Activated T-helper 2 cell treated with anti-CD3 and anti-CD28 coated beads, Interferon-gamma antibody, Interleukin-2, Interleukin-4, amounts not matched to agents 10 μg/mL and 5 μg/mL and 100 μg/mL, durations not matched to agents 14 hours and 24 hours and 36 hours (primary cell): ENCODE measurements at regions of chr3 and their contacts with region 1.

Region 1: DNA sequence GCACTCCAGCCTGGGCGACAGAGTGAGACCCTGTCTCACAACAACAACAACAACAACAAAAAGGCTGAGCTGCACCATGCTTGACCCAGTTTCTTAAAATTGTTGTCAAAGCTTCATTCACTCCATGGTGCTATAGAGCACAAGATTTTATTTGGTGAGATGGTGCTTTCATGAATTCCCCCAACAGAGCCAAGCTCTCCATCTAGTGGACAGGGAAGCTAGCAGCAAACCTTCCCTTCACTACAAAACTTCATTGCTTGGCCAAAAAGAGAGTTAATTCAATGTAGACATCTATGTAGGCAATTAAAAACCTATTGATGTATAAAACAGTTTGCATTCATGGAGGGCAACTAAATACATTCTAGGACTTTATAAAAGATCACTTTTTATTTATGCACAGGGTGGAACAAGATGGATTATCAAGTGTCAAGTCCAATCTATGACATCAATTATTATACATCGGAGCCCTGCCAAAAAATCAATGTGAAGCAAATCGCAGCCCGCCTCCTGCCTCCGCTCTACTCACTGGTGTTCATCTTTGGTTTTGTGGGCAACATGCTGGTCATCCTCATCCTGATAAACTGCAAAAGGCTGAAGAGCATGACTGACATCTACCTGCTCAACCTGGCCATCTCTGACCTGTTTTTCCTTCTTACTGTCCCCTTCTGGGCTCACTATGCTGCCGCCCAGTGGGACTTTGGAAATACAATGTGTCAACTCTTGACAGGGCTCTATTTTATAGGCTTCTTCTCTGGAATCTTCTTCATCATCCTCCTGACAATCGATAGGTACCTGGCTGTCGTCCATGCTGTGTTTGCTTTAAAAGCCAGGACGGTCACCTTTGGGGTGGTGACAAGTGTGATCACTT is 2.0 kb downstream of the CCR5 start:
- DNase-seq: peak; percentile 24
- H3K4me3 Mint-ChIP-seq: no peak overlapping the region
- H3K27ac Mint-ChIP-seq: no peak overlapping the region
- H3K4me1 Mint-ChIP-seq: peaks cover 55% of the 10 kb centered on the region
- H3K27me3 Mint-ChIP-seq: peaks cover 51% of the 10 kb centered on the region

Region 2: DNA sequence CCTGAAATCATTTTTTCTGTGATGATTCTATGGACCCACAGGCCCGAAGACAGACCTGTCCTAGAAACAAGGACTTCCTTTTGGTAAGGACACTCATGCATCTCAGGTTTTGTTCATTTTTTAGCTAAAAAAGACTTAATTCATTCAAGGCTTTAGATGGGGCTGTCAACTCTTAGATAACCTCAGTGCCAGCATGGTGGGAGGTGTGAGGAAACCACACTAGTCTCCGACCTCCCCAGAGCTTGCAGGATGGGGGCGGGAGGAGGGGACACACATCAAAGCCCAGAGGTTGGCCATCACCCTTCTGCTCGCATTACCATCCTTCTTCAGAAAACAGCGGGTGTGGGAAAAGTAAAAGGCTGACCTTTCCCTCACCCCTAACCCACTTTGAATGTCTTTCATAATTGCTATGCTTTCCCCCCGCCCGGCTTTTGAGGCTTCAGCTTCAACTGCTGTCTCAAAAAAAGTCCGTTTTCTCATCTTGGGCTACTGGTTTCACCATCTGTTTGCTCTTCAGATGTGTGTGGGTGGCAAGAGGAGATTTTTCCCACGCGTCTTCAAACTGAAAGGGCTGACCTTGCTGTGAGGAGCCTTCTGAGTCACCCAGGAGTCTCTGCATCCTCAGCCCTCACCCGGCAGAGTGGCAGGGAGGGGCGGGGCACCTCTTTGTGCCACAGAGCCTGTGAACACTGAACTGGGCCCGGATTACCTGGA is 457.1 kb before region 1 on chr3:
- intact Hi-C with region 1: loop called (anchors 5 kb)
- DNase-seq: peak; percentile 68
- H3K4me3 Mint-ChIP-seq: peak overlapping the region; percentile 23
- H3K27ac Mint-ChIP-seq: peak overlapping the region; percentile 51
- H3K4me1 Mint-ChIP-seq: peaks cover 25% of the 10 kb centered on the region
- H3K27me3 Mint-ChIP-seq: peaks cover 38% of the 10 kb centered on the region

Region 3: GRCh38 chr3:45978006-45978761 is 394.5 kb before region 1 on chr3:
- intact Hi-C with region 1: loop called (anchors 2 kb)
- DNase-seq: peak; percentile 58
- H3K4me3 Mint-ChIP-seq: peak overlapping the region; percentile 81
- H3K27ac Mint-ChIP-seq: peak overlapping the region; percentile 98
- H3K4me1 Mint-ChIP-seq: peaks cover 74% of the 10 kb centered on the region
- H3K27me3 Mint-ChIP-seq: no peaks in the 10 kb centered on the region

Region 4: GRCh38 chr3:46208167-46208704 is 164.5 kb before region 1 on chr3 and contains the start of gene CCR1:
- intact Hi-C with region 1: loop called (anchors 1 kb)
- DNase-seq: peak; percentile 44
- H3K4me3 Mint-ChIP-seq: no peak within 1 kb of the TSS
- H3K27ac Mint-ChIP-seq: peak within 1 kb of the TSS; percentile 18
- H3K4me1 Mint-ChIP-seq: peaks cover 25% of the 10 kb centered on the region
- H3K27me3 Mint-ChIP-seq: peaks cover 31% of the 10 kb centered on the region
- total RNA-seq, gene CCR1: 0.41 and 0.51 TPM in 2 replicates

Region 5: GRCh38 chr3:46276502-46277099 is 96.1 kb before region 1 on chr3:
- intact Hi-C with region 1: loop called (anchors 1 kb)
- DNase-seq: peak; percentile 65
- H3K4me3 Mint-ChIP-seq: no peak overlapping the region
- H3K27ac Mint-ChIP-seq: no peak overlapping the region
- H3K4me1 Mint-ChIP-seq: peaks cover 38% of the 10 kb centered on the region
- H3K27me3 Mint-ChIP-seq: peaks cover 49% of the 10 kb centered on the region

Region 6: DNA sequence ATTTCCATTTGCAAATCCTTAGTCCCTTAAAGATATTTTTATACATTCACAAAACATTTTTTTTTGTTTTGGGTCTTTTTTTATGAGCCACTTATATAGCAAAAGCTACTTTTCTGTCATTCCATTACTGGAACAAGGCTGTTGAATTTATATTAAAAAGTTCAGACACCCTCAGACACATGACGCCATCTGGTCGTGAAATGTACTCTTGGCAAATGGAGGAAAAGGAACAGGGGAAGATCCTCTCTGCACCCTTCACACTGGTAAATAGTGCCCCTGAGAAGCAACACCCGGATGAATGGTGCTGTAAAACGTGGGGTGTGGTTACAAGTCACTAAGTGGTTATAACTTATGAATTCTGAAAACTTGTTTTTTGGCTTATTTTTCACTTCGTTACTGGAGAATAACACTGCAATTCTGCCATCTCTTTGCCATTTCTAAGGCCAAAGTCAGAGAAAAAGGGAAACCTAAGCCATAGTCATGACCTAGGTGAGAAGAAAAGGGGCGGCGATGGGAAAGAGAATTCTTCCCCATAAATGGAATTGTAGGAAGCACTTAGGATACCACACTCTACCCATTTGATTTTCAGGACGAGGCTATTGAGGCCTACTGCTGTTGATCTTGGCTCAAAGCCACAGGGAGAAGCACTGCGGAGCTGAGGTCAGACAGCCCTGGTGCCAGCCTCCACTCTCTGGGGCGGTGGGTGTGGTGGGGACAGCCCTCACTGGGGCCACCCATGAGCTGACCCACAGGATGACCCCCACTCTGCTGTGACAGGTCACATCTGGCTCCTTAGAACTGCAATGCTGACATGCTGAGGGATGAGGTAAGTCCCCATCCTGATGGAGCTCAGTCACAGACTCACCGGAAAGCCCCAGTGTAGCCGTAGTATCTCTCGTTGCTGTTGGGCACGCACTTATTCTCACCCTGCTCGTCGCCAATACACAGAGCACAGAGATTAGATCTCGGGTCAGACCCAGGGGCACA is 70.1 kb after region 1 on chr3:
- intact Hi-C with region 1: loop called (anchors 5 kb)
- DNase-seq: peak; percentile 14
- H3K4me3 Mint-ChIP-seq: no peak overlapping the region
- H3K27ac Mint-ChIP-seq: no peak overlapping the region
- H3K4me1 Mint-ChIP-seq: peaks cover 18% of the 10 kb centered on the region
- H3K27me3 Mint-ChIP-seq: peaks cover 10% of the 10 kb centered on the region